ENCODE measurements at regions of chr14 and their contacts with region 1.

Region 1: GRCh38 chr14:69242311-69243224 is 17.4 kb upstream of the GALNT16 start:
- DNase-seq: no peak
- ATAC-seq: peak; percentile 89
- H3K4me3 ChIP-seq: no peak overlapping the region
- H3K27ac ChIP-seq: no peak overlapping the region
- H3K4me1 ChIP-seq: no peaks in the 10 kb centered on the region
- H3K27me3 ChIP-seq: no peaks in the 10 kb centered on the region
- CTCF ChIP-seq: peak; percentile 87

Region 2: GRCh38 chr14:69151315-69152049 is 91.1 kb before region 1 on chr14:
- intact Hi-C with region 1: no loop called
- DNase-seq: peak; percentile 91
- ATAC-seq: peak; percentile 81
- H3K4me3 ChIP-seq: peak overlapping the region; percentile 96
- H3K27ac ChIP-seq: peak overlapping the region; percentile 94
- H3K4me1 ChIP-seq: peaks cover 32% of the 10 kb centered on the region
- H3K27me3 ChIP-seq: no peaks in the 10 kb centered on the region
- CTCF ChIP-seq: peak; percentile 61

Region 3: GRCh38 chr14:69315301-69315700 is 72.7 kb after region 1 on chr14:
- intact Hi-C with region 1: no loop called
- DNase-seq: peak; percentile 30
- ATAC-seq: no peak
- H3K4me3 ChIP-seq: no peak overlapping the region
- H3K27ac ChIP-seq: no peak overlapping the region
- H3K4me1 ChIP-seq: peaks cover 6% of the 10 kb centered on the region
- H3K27me3 ChIP-seq: peaks cover 7% of the 10 kb centered on the region
- CTCF ChIP-seq: no peak

Region 4: GRCh38 chr14:69325646-69326265 is 83.2 kb after region 1 on chr14:
- intact Hi-C with region 1: no loop called
- DNase-seq: peak; percentile 25
- ATAC-seq: no peak
- H3K4me3 ChIP-seq: no peak overlapping the region
- H3K27ac ChIP-seq: no peak overlapping the region
- H3K4me1 ChIP-seq: no peaks in the 10 kb centered on the region
- H3K27me3 ChIP-seq: no peaks in the 10 kb centered on the region
- CTCF ChIP-seq: no peak

Region 5: DNA sequence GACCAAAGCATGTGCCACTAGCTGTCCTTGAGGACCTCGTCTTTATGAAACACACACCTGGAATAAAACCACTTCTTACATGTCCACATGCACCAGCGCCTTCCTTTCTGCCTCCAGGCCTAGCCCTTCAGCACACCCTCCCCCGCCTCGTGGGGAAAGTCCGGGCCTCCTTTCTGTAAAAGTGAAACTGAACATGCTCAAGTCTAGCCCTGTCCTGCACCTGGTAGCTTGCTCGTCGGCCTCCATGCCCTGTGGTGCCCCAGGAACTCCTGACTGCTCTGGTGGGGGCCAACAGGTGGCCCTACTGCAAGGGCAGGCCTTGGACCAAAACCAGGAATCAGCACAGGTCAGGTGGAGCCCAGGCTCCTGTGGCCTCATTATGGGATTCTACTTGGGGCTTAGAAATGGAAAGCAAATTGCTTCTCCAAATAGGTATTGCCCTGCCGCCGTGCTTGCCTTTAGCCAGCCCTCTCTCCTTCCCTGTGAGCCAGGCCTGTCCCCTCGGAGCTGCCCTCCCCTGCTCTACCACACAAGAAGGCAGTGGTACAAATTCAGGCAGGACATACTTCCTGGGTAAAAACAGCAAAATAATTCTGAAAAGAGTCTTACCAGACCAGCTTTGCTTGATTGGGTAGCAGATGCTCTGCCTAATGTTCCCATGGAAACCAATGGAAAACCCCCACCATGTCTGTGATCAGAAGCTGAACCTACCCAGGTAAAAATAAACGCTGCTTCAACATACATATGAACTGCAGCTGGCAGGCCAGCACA is 112.0 kb after region 1 on chr14:
- intact Hi-C with region 1: loop called (anchors 10 kb)
- DNase-seq: no peak
- ATAC-seq: peak; percentile 47
- H3K4me3 ChIP-seq: no peak overlapping the region
- H3K27ac ChIP-seq: no peak overlapping the region
- H3K4me1 ChIP-seq: no peaks in the 10 kb centered on the region
- H3K27me3 ChIP-seq: no peaks in the 10 kb centered on the region
- CTCF ChIP-seq: no peak

Region 6: GRCh38 chr14:69460093-69460701 is 217.6 kb after region 1 on chr14:
- intact Hi-C with region 1: loop called (anchors 5 kb)
- DNase-seq: no peak
- ATAC-seq: peak; percentile 93
- H3K4me3 ChIP-seq: no peak overlapping the region
- H3K27ac ChIP-seq: no peak overlapping the region
- H3K4me1 ChIP-seq: no peaks in the 10 kb centered on the region
- H3K27me3 ChIP-seq: no peaks in the 10 kb centered on the region
- CTCF ChIP-seq: peak; percentile 84

Measured in upper lobe of right lung (tissue), 1 donor.